Head of caudate nucleus (tissue), 42 donors: ENCODE measurements at regions of chr20 and their contacts with region 1.

Region 1: DNA sequence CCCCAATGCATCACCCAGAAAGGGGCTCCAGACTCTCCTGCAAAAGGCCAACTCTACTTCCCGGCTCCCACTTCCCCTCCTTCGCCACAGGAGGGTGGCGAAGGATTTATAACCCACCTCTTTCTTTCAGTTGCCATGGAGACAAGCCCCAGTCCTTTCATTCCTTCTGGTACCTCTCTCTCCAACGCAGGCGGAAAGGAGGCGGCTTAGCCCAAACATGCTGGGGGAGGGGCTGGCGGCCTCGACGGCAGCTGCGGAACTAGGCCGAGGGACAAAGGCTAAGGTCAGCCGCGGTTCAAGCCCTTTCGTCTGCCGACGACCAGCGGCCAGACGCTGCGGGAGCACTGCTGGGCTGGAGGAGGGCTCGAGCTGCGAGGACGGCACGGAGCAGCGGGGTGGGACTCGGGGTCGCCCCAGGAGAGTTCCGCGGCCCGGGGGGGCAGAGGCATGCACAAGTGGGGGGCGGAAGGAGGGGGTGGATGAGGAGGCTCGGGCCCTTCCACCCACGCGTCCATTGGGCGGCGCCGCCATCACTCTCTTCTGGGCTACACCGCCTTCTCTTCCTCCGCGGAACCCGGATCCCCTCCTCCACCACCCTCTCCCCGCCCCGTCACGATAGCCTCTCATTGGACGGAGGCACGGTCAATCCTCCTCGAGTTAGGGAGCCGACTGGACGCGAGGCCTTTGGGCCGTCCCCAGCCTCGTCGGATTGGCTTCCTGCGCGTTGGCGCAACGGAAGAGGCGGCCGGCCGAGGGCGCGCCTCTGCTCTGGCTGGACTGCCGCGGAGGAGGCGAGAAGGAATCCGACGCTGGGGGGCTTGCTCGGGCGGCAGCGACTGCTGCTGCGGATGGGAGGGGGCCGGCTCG is at the start of gene PANK2:
- DNase-seq: peak; percentile 97 to 100 (median 99)

Region 2: GRCh38 chr20:3973744-3974143 is 84.9 kb after region 1 on chr20:
- intact Hi-C with region 1: no loop called
- DNase-seq: no peak

Region 3: GRCh38 chr20:4038047-4038459 is 149.2 kb after region 1 on chr20:
- intact Hi-C with region 1: no loop called
- DNase-seq: peak in 16 of 42 donors; percentile 15 to 50 (median 22)

Region 4: DNA sequence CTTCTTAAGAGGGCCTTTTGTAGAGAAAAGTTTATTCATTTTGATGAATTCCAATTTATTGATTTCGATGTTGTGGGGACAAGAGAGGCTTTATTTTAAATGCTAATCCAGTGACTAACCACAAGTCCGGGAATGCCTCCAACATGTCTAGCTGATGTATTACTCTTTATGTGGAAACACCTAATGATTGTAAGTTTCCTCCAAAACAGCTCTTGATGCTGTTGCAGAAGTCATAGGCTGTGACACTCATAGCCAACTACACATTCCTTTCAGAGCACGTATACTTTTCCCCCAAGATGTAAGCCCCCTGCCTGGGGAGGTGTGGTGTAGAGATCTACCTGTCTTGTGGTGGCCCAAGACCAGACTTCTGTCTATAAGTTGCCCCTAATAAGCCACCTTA is 187.8 kb after region 1 on chr20:
- intact Hi-C with region 1: loop called (anchors 10 kb)
- DNase-seq: peak in 2 of 42 donors; percentile 6 to 41